ENCODE measurements at regions of chr1 and their contacts with region 1.

Region 1: GRCh38 chr1:8727809-8728213 is 89.6 kb downstream of the RERE start:
- DNase-seq: no peak
- ATAC-seq: no peak
- H3K4me3 ChIP-seq: no peak overlapping the region
- H3K4me3 Mint-ChIP-seq: no peak overlapping the region
- H3K27ac ChIP-seq: no peak overlapping the region
- H3K27ac Mint-ChIP-seq: no peak overlapping the region
- H3K4me1 ChIP-seq: peaks cover 10 to 13% of the 10 kb centered on the region in 2 donors
- H3K4me1 Mint-ChIP-seq: peaks cover 24% of the 10 kb centered on the region
- H3K27me3 ChIP-seq: no peaks in the 10 kb centered on the region
- H3K27me3 Mint-ChIP-seq: no peaks in the 10 kb centered on the region
- CTCF ChIP-seq: no peak

Region 2: GRCh38 chr1:8409106-8409505 is 318.7 kb before region 1 on chr1:
- CTCF ChIA-PET with region 1: interaction called, 17 read pairs
- POLR2A ChIA-PET with region 1: no interaction called
- intact Hi-C with region 1: loop called (anchors 1 kb)
- DNase-seq: peak; percentile 63
- ATAC-seq: peak; percentile 87
- H3K4me3 ChIP-seq: no peak overlapping the region
- H3K4me3 Mint-ChIP-seq: peak overlapping the region; percentile 11
- H3K27ac ChIP-seq: peak overlapping the region; percentile 6 to 51
- H3K27ac Mint-ChIP-seq: peak overlapping the region; percentile 27
- H3K4me1 ChIP-seq: peaks cover 11 to 21% of the 10 kb centered on the region in 2 donors
- H3K4me1 Mint-ChIP-seq: peaks cover 38% of the 10 kb centered on the region
- H3K27me3 ChIP-seq: no peaks in the 10 kb centered on the region
- H3K27me3 Mint-ChIP-seq: no peaks in the 10 kb centered on the region
- CTCF ChIP-seq: peak; percentile 71

Region 3: DNA sequence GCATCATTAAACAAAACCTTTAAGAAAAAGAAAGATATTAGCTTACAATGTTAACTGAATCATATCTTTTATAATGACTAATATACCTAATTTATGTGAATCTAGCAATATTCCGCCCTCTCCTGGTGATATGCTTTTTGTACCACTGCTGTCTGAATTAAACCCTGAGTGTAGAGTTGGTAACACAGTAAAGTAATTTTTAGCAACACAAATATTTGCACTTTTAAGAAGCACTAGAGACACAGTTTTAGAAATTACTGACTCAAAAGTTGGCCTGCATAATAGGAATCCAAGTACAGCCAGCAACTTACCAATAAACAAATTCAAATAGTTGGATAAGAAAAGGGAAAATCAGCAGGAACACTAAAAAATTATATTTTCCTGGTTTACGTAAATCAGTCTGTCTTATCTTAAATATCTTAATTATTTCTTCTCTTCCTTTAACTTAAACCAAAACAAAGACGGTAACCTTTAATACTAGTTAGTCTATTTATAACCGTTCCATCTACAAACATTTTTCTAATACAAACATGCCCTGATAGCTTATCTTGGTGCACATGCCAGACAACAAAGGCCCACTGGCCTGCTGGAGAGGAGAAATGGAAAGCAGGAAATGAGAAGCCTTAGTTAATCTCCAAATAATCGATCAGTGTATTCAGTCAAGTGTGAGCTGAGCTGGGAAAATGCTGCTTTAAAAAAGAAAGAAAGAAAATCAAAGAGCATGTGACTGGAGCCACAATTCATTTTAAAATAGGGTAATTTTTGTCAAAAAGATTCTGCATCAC is 156.4 kb before region 1 on chr1:
- CTCF ChIA-PET with region 1: interaction called, 39 read pairs
- POLR2A ChIA-PET with region 1: interaction called, 11 read pairs
- intact Hi-C with region 1: no loop called
- DNase-seq: peak; percentile 20
- ATAC-seq: no peak
- H3K4me3 ChIP-seq: no peak overlapping the region
- H3K4me3 Mint-ChIP-seq: no peak overlapping the region
- H3K27ac ChIP-seq: no peak overlapping the region
- H3K27ac Mint-ChIP-seq: no peak overlapping the region
- H3K4me1 ChIP-seq: peaks cover 0 to 7% of the 10 kb centered on the region in 2 donors
- H3K4me1 Mint-ChIP-seq: peaks cover 13% of the 10 kb centered on the region
- H3K27me3 ChIP-seq: no peaks in the 10 kb centered on the region
- H3K27me3 Mint-ChIP-seq: no peaks in the 10 kb centered on the region
- CTCF ChIP-seq: peak; percentile 38

Region 4: DNA sequence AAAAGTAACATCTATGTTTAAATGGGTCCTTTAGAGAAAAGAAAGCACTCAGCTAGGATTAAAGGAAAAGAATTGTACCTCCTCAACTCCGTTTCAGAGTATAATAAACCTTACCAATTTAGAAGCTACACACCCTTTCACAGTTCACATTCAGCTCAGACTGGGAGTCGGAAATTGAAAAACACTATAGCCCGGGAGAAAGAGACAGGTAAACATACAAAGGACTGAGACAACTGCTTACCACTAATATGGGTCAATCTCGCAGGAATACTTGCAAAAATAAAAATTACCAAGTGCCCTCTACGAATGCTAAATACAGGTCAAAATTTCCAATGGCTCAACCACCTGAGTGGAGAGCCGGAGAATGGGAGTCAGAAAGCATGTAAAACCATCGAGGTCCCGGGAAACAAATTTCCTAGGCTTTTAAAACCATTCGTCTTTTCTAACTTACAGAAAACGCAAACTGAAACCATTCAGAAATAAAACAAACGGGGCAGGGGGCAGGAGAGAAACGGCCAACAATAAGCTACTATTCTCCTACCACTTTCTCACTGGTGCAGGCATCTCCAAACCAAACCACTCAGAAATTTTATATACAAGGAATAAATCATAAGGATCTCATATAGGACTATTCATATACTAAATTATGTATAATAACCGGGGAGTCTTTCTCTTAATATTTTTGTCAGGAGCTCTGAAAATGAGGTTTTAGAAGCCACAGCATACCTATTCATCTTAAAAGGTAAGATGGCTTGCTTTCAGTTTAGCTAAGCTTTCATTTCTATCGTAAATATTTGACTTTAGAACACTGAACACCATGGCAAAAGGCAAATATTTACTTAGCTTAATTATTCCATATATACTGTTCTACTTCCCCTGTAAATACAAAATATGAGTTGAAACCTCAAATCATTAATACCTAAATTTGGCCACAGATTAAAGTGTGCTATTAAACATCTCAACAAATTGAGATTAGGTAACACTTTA is 46.9 kb before region 1 on chr1:
- CTCF ChIA-PET with region 1: interaction called, 14 read pairs
- POLR2A ChIA-PET with region 1: no interaction called
- intact Hi-C with region 1: no loop called
- DNase-seq: no peak
- ATAC-seq: no peak
- H3K4me3 ChIP-seq: no peak overlapping the region
- H3K4me3 Mint-ChIP-seq: no peak overlapping the region
- H3K27ac ChIP-seq: no peak overlapping the region
- H3K27ac Mint-ChIP-seq: no peak overlapping the region
- H3K4me1 ChIP-seq: peaks cover 28 to 31% of the 10 kb centered on the region in 2 donors
- H3K4me1 Mint-ChIP-seq: peaks cover 42% of the 10 kb centered on the region
- H3K27me3 ChIP-seq: no peaks in the 10 kb centered on the region
- H3K27me3 Mint-ChIP-seq: no peaks in the 10 kb centered on the region
- CTCF ChIP-seq: no peak

Region 5: DNA sequence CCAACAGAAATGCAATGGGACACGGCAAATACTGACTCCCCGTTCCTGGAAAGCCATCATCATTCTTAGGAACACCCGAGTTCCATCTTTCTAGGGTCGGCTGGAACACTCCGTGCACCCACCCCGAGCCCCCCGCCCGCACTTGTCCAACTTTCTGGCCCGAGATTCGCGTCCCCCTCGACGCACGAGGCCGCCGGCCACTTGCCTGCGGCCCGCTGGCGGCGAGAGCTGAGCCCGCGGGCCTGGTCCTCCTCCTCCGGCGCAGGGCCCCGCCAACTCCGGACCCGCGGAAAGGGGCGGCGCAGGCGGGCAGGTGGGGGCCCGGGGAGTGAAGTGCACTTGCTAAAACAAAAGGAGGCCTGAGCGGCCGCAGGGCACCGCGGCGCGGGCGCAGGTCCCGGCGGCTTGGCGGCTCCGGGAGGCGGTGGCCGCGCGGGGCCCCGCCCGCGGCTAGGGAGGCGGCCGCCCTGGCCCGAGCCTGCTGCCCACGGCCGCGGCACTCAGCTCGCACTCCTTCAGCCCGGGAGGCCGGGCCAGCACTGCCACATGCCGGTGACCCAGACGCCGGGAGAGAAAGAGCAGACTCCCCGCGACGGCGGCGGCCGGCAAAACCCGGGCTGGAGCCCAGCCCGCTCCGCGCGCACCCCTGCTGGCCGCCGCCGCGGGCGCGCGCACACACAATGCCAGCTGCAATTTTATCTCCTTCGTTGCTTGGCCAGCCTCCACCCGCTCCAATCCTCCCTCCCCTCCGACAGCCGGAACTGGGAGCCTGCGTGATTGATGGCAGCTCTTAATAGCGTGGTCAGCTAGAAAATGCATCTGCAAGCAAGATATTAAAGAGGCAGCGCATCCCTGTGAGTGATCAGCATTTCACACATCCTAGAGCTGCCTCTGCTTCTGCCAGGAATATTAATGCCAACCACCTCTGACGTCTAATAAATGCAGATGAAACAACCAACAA is 24.7 kb before region 1 on chr1:
- CTCF ChIA-PET with region 1: interaction called, 36 read pairs
- POLR2A ChIA-PET with region 1: interaction called, 3 read pairs
- intact Hi-C with region 1: no loop called
- DNase-seq: peak; percentile 88
- ATAC-seq: peak; percentile 72
- H3K4me3 ChIP-seq: peak overlapping the region; percentile 60 to 81 (median 63)
- H3K4me3 Mint-ChIP-seq: peak overlapping the region; percentile 93
- H3K27ac ChIP-seq: peak overlapping the region; percentile 54 to 77
- H3K27ac Mint-ChIP-seq: peak overlapping the region; percentile 93
- H3K4me1 ChIP-seq: peaks cover 32 to 39% of the 10 kb centered on the region in 2 donors
- H3K4me1 Mint-ChIP-seq: peaks cover 61% of the 10 kb centered on the region
- H3K27me3 ChIP-seq: no peaks in the 10 kb centered on the region
- H3K27me3 Mint-ChIP-seq: no peaks in the 10 kb centered on the region
- CTCF ChIP-seq: no peak

Region 6: GRCh38 chr1:8712413-8713231 is 15.2 kb before region 1 on chr1:
- CTCF ChIA-PET with region 1: interaction called, 37 read pairs
- POLR2A ChIA-PET with region 1: no interaction called
- intact Hi-C with region 1: no loop called
- DNase-seq: peak; percentile 70
- ATAC-seq: peak; percentile 85
- H3K4me3 ChIP-seq: peak overlapping the region; percentile 5 to 54 (median 31)
- H3K4me3 Mint-ChIP-seq: peak overlapping the region; percentile 75
- H3K27ac ChIP-seq: peak overlapping the region; percentile 73 to 83
- H3K27ac Mint-ChIP-seq: peak overlapping the region; percentile 85
- H3K4me1 ChIP-seq: peaks cover 32 to 41% of the 10 kb centered on the region in 2 donors
- H3K4me1 Mint-ChIP-seq: peaks cover 38% of the 10 kb centered on the region
- H3K27me3 ChIP-seq: no peaks in the 10 kb centered on the region
- H3K27me3 Mint-ChIP-seq: no peaks in the 10 kb centered on the region
- CTCF ChIP-seq: no peak